Activated naive CD4-positive, alpha-beta T cell treated with anti-CD3 and anti-CD28 coated beads for 36 hours (primary cell): ENCODE measurements at regions of chr12 and their contacts with region 1.

Region 1: DNA sequence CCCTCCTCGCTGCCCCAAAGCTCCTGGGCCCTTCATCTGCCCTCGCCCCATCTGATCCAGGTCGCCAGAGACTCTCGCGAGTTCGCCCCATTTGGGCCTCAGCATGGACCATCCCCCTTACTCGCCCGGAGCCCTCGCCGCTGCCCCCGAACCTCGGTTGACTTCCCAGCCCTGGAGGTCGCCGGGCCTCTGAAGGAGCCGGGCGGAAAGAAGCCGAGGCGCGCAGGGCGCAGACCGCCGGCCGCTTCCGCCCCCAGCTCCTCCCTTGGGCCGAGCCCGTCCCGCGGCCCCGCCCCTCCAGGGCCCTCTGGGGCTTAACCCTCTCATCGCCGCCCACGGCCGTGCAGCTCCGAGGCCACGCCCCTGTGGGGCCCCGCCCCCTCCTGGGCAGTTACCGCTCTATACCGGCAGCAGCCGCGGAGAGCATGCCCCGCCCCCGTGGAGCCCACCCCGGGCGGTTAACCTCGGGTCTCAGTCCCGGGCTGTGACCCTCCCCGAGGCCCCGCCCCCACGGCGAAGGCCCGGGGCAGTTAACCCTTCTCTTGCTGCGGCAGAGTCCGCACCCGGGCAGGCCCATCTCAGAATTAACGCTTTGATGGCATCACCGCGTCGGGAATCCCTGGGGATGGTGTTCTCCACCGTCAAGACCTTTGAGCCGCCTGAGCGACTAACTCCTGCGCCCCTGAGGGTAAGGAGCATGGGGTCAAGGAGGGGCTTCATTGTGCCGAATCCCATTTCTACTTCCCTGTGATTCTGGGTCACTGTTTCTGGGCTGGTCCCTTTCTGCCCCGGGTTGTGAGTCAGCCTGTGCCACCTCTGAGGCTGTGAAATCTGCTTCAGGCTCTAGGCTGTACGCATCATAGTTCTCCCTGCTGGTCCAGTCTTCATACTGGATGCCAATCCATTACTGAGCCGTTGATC is at the start of gene SPSB2:
- DNase-seq: peak; percentile 99
- H3K4me3 Mint-ChIP-seq: peak within 1 kb of the TSS; percentile 88
- H3K27ac Mint-ChIP-seq: peak within 1 kb of the TSS; percentile 81
- H3K4me1 Mint-ChIP-seq: peaks cover 45% of the 10 kb centered on the region
- H3K27me3 Mint-ChIP-seq: no peaks in the 10 kb centered on the region
- total RNA-seq, gene SPSB2: 2.6 to 2.8 TPM

Region 2: DNA sequence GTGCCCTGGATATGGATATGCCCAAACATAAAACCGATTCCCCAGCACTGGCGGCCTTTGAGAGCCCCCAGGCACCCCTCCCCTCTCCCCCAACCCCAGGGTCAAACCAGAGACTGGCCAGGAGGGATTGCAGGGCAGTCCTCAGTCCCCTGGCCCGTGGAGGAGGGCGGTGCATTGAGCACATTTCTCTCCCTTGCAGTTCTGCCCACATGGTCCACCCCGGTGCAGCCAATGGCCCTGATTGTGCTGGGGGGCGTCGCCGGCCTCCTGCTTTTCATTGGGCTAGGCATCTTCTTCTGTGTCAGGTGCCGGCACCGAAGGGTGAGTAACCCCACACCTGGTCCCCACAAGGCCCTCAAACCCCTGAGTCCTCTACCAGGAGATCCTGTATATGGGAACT is 55.1 kb before region 1 on chr12:
- CTCF ChIA-PET with region 1: no interaction called
- intact Hi-C with region 1: no loop called
- DNase-seq: no peak
- H3K4me3 Mint-ChIP-seq: no peak overlapping the region
- H3K27ac Mint-ChIP-seq: no peak overlapping the region
- H3K4me1 Mint-ChIP-seq: peaks cover 11% of the 10 kb centered on the region
- H3K27me3 Mint-ChIP-seq: peaks cover 2% of the 10 kb centered on the region

Region 3: GRCh38 chr12:6833189-6833890 is 40.0 kb before region 1 on chr12:
- CTCF ChIA-PET with region 1: interaction called, 13 read pairs
- intact Hi-C with region 1: no loop called
- DNase-seq: no peak
- H3K4me3 Mint-ChIP-seq: no peak overlapping the region
- H3K27ac Mint-ChIP-seq: no peak overlapping the region
- H3K4me1 Mint-ChIP-seq: peaks cover 10% of the 10 kb centered on the region
- H3K27me3 Mint-ChIP-seq: no peaks in the 10 kb centered on the region

Region 4: GRCh38 chr12:6904280-6905278 is 31.2 kb after region 1 on chr12 and contains the start of gene LRRC23:
- CTCF ChIA-PET with region 1: interaction called, 4 read pairs
- intact Hi-C with region 1: loop called (anchors 1 kb)
- DNase-seq: peak; percentile 99
- H3K4me3 Mint-ChIP-seq: no peak within 1 kb of the TSS
- H3K27ac Mint-ChIP-seq: no peak within 1 kb of the TSS
- H3K4me1 Mint-ChIP-seq: peaks cover 3% of the 10 kb centered on the region
- H3K27me3 Mint-ChIP-seq: no peaks in the 10 kb centered on the region
- total RNA-seq, gene LRRC23: 6.3 to 6.4 TPM

Region 5: DNA sequence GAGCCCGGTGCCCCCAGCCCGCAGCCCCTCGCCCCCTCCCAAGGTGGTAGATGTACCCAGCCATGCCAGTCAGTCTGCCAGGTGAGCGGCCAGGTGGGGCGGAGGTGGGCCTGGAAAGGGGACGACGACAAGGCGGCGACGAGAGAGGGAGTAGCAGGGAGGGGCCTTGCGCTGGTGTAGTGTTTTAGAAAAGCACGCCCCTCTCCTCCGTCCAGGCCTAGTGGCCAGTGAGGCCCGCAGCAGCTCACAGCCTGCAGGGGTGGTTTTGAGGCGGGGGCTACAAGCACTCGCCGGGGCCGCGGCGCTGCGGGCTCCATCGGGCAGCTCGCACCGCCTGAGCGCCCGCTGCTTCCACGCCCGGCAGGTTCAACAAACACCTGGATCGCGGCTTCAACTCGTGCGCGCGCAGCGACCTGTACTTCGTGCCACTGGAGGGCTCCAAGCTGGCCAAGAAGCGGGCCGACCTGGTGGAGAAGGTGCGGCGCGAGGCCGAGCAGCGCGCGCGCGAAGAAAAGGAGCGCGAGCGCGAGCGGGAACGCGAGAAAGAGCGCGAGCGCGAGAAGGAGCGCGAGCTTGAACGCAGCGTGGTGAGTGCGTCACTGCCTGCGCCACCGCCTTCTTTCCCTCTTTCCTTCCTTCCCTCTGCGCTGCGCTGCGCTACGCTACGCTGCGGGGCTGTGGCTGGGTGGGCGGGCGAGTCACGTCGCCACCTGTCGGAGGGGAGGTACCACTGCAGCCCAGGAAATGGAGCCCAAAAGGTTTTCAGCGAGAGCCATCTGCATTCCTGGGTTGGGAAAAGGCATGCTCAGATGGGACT is 64.3 kb after region 1 on chr12:
- CTCF ChIA-PET with region 1: interaction called, 7 read pairs
- intact Hi-C with region 1: loop called (anchors 1 kb)
- DNase-seq: peak; percentile 96
- H3K4me3 Mint-ChIP-seq: peak overlapping the region; percentile 92
- H3K27ac Mint-ChIP-seq: peak overlapping the region; percentile 96
- H3K4me1 Mint-ChIP-seq: peaks cover 47% of the 10 kb centered on the region
- H3K27me3 Mint-ChIP-seq: no peaks in the 10 kb centered on the region

Region 6: GRCh38 chr12:7018350-7019042 is 145.1 kb after region 1 on chr12 and contains the start of gene LPCAT3:
- CTCF ChIA-PET with region 1: no interaction called
- intact Hi-C with region 1: loop called (anchors 1 kb)
- DNase-seq: peak; percentile 98
- H3K4me3 Mint-ChIP-seq: peak within 1 kb of the TSS; percentile 94
- H3K27ac Mint-ChIP-seq: peak within 1 kb of the TSS; percentile 92
- H3K4me1 Mint-ChIP-seq: peaks cover 35% of the 10 kb centered on the region
- H3K27me3 Mint-ChIP-seq: no peaks in the 10 kb centered on the region
- total RNA-seq, gene LPCAT3: 22.7 to 27.2 TPM

Region 7: GRCh38 chr12:7219599-7220243 is 346.4 kb after region 1 on chr12:
- CTCF ChIA-PET with region 1: no interaction called
- intact Hi-C with region 1: no loop called
- DNase-seq: peak; percentile 87
- H3K4me3 Mint-ChIP-seq: no peak overlapping the region
- H3K27ac Mint-ChIP-seq: no peak overlapping the region
- H3K4me1 Mint-ChIP-seq: no peaks in the 10 kb centered on the region
- H3K27me3 Mint-ChIP-seq: no peaks in the 10 kb centered on the region

Region 8: DNA sequence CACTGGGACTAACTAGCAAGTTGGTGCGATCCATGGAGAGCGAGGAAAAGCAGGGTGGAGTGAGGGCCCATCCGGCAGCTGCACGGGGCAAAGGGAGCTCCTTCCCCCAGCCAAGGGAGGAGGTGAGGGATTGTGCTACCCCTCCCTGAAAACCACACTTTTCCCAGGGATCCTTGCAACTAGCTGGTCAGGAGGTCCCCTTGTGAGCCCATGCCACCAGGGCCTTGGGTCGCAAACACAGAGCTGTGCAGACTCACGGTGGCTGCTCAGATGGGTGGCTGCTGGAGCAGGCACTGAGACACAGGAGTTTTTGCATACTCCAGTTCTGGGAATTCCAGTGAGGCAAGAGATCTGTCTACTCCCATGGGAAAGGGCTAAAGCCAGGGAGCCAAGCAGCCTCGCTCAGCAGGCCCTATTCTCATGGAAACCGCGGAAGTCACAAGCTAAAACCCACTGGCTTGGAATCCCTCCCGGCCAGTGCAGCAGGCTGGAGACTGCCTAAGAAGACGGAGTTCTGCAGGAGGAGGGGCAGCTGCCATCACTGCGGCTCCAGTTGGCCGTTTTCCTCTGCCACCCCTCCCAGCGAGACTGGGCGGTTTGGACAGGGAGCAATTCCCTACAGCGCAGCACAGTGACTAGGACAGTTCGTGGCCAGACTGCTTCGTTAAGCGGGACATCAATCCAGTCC is 1272.5 kb after region 1 on chr12:
- CTCF ChIA-PET with region 1: no interaction called
- intact Hi-C with region 1: no loop called
- DNase-seq: no peak
- H3K4me3 Mint-ChIP-seq: no peak overlapping the region
- H3K27ac Mint-ChIP-seq: no peak overlapping the region
- H3K4me1 Mint-ChIP-seq: no peaks in the 10 kb centered on the region
- H3K27me3 Mint-ChIP-seq: peaks cover 3% of the 10 kb centered on the region